Dorsolateral prefrontal cortex (tissue), 120 donors: ENCODE measurements at regions of chr11 and their contacts with region 1.

Region 1: GRCh38 chr11:134124660-134125451 is 56.0 kb downstream of the JAM3 start:
- DNase-seq: peak; percentile 42 to 84 (median 71)
- H3K4me3 ChIP-seq: peak overlapping the region; percentile 33 to 76 (median 57)
- H3K27ac ChIP-seq: peak overlapping the region; percentile 74 to 99 (median 97)
- H3K27me3 ChIP-seq: no peaks in the 10 kb centered on the region
- CTCF ChIP-seq: peak in 29 of 56 donors; percentile 6 to 51 (median 29)

Region 2: DNA sequence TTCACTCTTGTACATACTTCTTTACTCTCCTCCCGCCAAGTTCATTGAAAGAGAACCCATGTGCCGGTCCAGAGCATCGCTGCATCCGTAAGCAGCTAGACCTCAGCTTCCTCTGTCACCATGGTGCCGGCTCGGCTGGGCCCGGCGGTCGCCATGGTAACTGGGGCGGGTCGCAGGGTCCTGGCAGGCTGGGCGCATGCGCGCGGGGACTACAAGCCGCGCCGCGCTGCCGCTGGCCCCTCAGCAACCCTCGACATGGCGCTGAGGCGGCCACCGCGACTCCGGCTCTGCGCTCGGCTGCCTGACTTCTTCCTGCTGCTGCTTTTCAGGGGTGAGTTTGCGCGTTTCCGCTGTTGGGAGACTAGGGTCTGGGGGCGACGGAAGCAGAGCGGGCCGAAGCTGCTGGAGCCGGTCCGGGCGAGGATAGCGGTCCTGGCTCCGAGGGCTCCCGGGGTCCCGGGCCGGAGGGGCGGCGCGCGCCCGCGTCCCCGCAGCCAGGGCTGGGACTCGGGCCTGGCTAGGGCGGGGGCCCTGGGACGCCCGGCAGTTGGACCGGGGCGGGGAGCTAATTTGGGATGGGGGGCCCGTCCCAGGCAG is 55.9 kb before region 1 on chr11 and contains the start of gene JAM3:
- intact Hi-C with region 1: loop called (anchors 1 kb)
- DNase-seq: peak; percentile 96 to 99 (median 98)
- H3K4me3 ChIP-seq: peak within 1 kb of the TSS; percentile 62 to 98 (median 88)
- H3K27ac ChIP-seq: peak within 1 kb of the TSS; percentile 79 to 98 (median 93)
- H3K27me3 ChIP-seq: no peaks in the 10 kb centered on the region
- CTCF ChIP-seq: peak in 16 of 56 donors; percentile 5 to 32 (median 22)
- total RNA-seq, gene JAM3: 43.5 to 270 (median 90.6) TPM